ENCODE measurements at regions of chr5 and their contacts with region 1.

Region 1: DNA sequence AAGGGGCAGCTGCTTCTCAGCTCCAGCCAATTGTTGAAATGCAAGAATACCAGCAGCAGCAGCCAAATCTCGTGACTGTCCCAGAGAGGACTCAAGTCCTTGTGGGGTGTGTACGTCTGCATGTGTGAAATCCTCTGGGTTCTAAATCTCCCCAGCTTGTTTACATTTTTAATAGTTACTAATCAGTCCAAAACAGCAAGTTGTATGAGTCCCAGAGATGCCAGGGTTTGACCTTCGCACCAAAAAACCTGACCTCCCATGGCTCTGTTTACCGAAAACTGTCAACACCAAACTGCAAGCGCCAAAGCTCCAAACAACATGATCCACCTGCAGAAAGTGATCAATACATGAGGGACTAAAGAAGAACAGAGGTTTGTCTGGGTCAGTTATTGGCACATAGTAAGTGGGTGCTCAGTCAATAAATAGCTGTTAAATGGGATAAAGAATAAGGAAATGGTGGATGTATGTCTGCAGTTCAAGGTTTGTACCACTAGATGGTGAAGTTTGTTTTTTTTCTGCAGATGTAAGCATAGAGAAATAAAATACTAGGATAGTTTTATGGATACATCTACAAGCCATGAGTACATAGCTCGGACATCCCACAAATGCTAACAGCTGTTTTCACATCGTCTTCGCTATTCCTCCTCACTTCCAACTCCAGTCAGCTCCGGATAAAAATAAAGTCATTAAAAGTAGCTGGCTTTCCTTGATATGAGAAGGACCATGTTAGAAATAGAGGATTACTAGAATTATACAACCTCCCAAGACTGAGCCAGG is 85.3 kb upstream of the ADRB2 start:
- DNase-seq: no peak
- ATAC-seq: no peak
- H3K4me3 Mint-ChIP-seq: no peak overlapping the region
- H3K27ac Mint-ChIP-seq: no peak overlapping the region
- H3K4me1 Mint-ChIP-seq: peaks cover 10% of the 10 kb centered on the region
- H3K27me3 Mint-ChIP-seq: no peaks in the 10 kb centered on the region
- CTCF ChIP-seq: peak; percentile 55

Region 2: GRCh38 chr5:148791334-148791667 is 50.1 kb after region 1 on chr5:
- CTCF ChIA-PET with region 1: interaction called, 18 read pairs
- POLR2A ChIA-PET with region 1: no interaction called
- intact Hi-C with region 1: no loop called
- DNase-seq: no peak
- ATAC-seq: peak; percentile 55
- H3K4me3 Mint-ChIP-seq: no peak overlapping the region
- H3K27ac Mint-ChIP-seq: no peak overlapping the region
- H3K4me1 Mint-ChIP-seq: peaks cover 42% of the 10 kb centered on the region
- H3K27me3 Mint-ChIP-seq: no peaks in the 10 kb centered on the region
- CTCF ChIP-seq: no peak

Region 3: GRCh38 chr5:148820461-148821395 is 79.6 kb after region 1 on chr5:
- CTCF ChIA-PET with region 1: interaction called, 10 read pairs
- POLR2A ChIA-PET with region 1: interaction called, 3 read pairs
- intact Hi-C with region 1: no loop called
- DNase-seq: no peak
- ATAC-seq: peak; percentile 48
- H3K4me3 Mint-ChIP-seq: no peak overlapping the region
- H3K27ac Mint-ChIP-seq: no peak overlapping the region
- H3K4me1 Mint-ChIP-seq: peaks cover 56% of the 10 kb centered on the region
- H3K27me3 Mint-ChIP-seq: no peaks in the 10 kb centered on the region
- CTCF ChIP-seq: no peak

Region 4: GRCh38 chr5:148831590-148832565 is 90.7 kb after region 1 on chr5:
- CTCF ChIA-PET with region 1: interaction called, 14 read pairs
- POLR2A ChIA-PET with region 1: interaction called, 4 read pairs
- intact Hi-C with region 1: no loop called
- DNase-seq: no peak
- ATAC-seq: peak; percentile 70
- H3K4me3 Mint-ChIP-seq: peak overlapping the region; percentile 76
- H3K27ac Mint-ChIP-seq: peak overlapping the region; percentile 98
- H3K4me1 Mint-ChIP-seq: peaks cover 97% of the 10 kb centered on the region
- H3K27me3 Mint-ChIP-seq: no peaks in the 10 kb centered on the region
- CTCF ChIP-seq: no peak

Region 5: DNA sequence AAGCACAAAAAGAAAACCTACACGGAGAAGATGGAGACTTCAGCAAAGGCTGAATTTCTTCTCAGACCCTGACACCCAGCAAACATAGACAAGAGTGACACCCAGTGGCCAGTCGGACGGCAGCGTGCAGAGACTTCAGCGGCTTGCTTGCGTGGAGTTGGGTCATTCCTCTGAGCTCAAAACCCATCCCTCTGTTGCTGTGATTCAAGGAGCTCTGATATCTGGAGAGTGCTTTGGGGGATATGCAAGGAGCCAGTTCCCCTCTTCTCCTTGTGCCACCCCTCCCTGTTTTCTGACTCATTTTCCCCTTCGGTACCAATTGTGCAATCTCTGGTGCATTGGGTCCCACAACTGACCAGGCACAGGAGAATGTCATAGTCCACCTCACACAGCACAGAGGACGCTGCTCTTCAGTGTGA is 294.2 kb after region 1 on chr5:
- CTCF ChIA-PET with region 1: interaction called, 275 read pairs
- POLR2A ChIA-PET with region 1: no interaction called
- intact Hi-C with region 1: loop called (anchors 2 kb)
- DNase-seq: peak; percentile 30
- ATAC-seq: peak; percentile 79
- H3K4me3 Mint-ChIP-seq: no peak overlapping the region
- H3K27ac Mint-ChIP-seq: no peak overlapping the region
- H3K4me1 Mint-ChIP-seq: no peaks in the 10 kb centered on the region
- H3K27me3 Mint-ChIP-seq: peaks cover 16% of the 10 kb centered on the region
- CTCF ChIP-seq: no peak

Measured in activated B cell treated with CpG ODN at 0.5 μM for 24 hours (primary cell).